Activated CD4-positive, alpha-beta memory T cell treated with anti-CD3 and anti-CD28 coated beads for 36 hours (primary cell): ENCODE measurements at regions of chr13 and their contacts with region 1.

Region 1: GRCh38 chr13:80276371-80277289 is 64.3 kb downstream of the SPRY2 start:
- DNase-seq: no peak
- H3K4me3 Mint-ChIP-seq: no peak overlapping the region
- H3K27ac Mint-ChIP-seq: no peak overlapping the region
- H3K4me1 Mint-ChIP-seq: no peaks in the 10 kb centered on the region
- H3K27me3 Mint-ChIP-seq: no peaks in the 10 kb centered on the region

Region 2: GRCh38 chr13:80297094-80297493 is 20.5 kb after region 1 on chr13:
- CTCF ChIA-PET with region 1: no interaction called
- POLR2A ChIA-PET with region 1: interaction called, 10 read pairs
- intact Hi-C with region 1: no loop called
- DNase-seq: no peak
- H3K4me3 Mint-ChIP-seq: no peak overlapping the region
- H3K27ac Mint-ChIP-seq: no peak overlapping the region
- H3K4me1 Mint-ChIP-seq: no peaks in the 10 kb centered on the region
- H3K27me3 Mint-ChIP-seq: no peaks in the 10 kb centered on the region

Region 3: GRCh38 chr13:80444240-80445015 is 167.8 kb after region 1 on chr13:
- CTCF ChIA-PET with region 1: no interaction called
- POLR2A ChIA-PET with region 1: no interaction called
- intact Hi-C with region 1: no loop called
- DNase-seq: no peak
- H3K4me3 Mint-ChIP-seq: no peak overlapping the region
- H3K27ac Mint-ChIP-seq: no peak overlapping the region
- H3K4me1 Mint-ChIP-seq: no peaks in the 10 kb centered on the region
- H3K27me3 Mint-ChIP-seq: no peaks in the 10 kb centered on the region